Endothelial cell of umbilical vein (primary cell): ENCODE measurements at regions of chr14 and their contacts with region 1.

Region 1: GRCh38 chr14:63770187-63770807 is 42.4 kb upstream of the SGPP1 start:
- DNase-seq: peak; percentile 63
- H3K4me3 ChIP-seq: no peak overlapping the region
- H3K27ac ChIP-seq: no peak overlapping the region
- H3K4me1 ChIP-seq: no peaks in the 10 kb centered on the region
- H3K27me3 ChIP-seq: no peaks in the 10 kb centered on the region
- CTCF ChIP-seq: peak; percentile 53 to 58
- POLR2A ChIP-seq: no peak

Region 2: DNA sequence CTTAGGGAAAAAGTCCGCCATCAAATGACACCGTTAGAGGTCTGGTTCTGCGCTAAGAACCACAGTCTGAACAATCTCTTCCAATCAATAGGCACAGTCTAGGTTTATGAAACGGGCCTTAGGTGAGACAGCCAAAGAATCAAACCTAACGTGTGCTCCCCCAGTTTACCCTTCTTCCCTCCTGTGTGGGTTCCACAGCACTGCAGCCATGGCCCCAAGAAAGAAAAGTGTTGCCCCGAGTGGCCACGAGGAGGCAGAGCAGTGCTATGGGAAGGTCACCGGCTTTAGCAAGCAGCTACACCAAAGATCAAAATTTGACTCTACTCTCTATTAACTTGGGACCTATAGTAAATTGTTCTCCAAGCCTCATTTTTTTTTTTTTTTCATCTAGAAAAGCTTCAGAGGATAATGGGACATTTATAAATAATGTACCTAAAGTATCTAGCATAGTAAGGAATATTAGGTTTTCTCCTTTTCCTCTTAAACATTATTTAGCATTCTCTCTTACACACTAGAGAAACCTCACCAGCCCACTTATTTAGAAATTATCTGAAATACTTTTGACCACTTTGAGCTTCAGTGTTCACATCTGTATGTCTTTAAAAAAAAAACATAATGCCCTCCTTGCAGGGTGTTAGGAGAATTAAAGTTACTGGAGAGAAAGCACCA is 381.4 kb before region 1 on chr14:
- CTCF ChIA-PET with region 1: interaction called, 65 read pairs
- POLR2A ChIA-PET with region 1: no interaction called
- dilution Hi-C with region 1: no loop called
- intact Hi-C with region 1: loop called (anchors 1 kb)
- DNase-seq: peak; percentile 75
- H3K4me3 ChIP-seq: no peak overlapping the region
- H3K27ac ChIP-seq: no peak overlapping the region
- H3K4me1 ChIP-seq: no peaks in the 10 kb centered on the region
- H3K27me3 ChIP-seq: no peaks in the 10 kb centered on the region
- CTCF ChIP-seq: peak; percentile 73 to 81
- POLR2A ChIP-seq: no peak

Region 3: GRCh38 chr14:63632932-63633514 is 137.3 kb before region 1 on chr14:
- CTCF ChIA-PET with region 1: interaction called, 58 read pairs
- POLR2A ChIA-PET with region 1: no interaction called
- dilution Hi-C with region 1: no loop called
- intact Hi-C with region 1: loop called (anchors 1 kb)
- DNase-seq: peak; percentile 52
- H3K4me3 ChIP-seq: no peak overlapping the region
- H3K27ac ChIP-seq: no peak overlapping the region
- H3K4me1 ChIP-seq: no peaks in the 10 kb centered on the region
- H3K27me3 ChIP-seq: no peaks in the 10 kb centered on the region
- CTCF ChIP-seq: peak; percentile 41 to 45
- POLR2A ChIP-seq: no peak

Region 4: DNA sequence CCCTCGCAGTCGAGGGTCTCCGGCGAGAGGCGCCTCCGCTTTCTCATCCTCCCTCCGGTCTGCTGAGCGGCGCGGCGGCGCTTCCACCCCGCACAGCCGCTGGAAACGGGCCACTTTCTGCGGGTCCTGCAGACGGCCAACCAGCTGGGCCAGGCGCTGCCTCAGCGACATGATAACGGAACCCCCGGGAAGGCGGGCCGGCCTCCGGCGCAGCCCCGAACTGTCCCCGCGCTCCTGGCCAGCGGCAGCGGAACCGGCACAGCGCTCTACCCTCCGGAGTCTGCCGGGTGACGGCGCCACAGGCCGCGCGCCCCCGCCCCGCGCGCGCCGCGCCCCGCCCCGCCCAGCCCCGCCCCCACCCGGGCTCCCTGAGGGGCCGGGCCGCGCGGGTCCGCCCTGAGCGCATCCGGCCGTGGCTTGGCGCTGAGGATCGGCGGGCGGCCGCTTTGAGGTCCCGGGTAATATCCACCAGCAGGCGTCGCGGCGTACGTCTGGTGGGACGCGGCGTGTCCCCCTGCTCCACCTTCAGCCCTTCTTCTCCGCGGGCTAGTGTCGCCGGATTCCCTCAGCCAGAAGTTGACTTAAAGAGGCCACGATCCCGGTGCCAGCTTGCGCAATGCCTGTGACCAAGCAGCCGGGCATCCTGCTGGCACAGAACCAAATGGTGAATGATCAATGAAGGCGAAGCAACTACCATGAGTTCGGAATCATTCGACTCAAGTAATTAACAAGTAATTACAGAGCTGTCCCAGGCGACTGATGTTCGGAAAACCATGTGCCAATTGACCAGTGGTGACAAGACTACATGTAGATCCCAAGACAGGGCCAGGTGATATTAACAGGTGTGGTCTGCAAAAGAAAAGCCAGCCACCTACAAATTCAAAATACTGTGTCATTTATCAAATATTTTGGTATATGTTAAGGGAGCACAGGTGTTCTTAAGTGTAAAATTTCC is 42.2 kb before region 1 on chr14 and contains the start of gene SGPP1:
- CTCF ChIA-PET with region 1: interaction called, 14 read pairs
- POLR2A ChIA-PET with region 1: no interaction called
- dilution Hi-C with region 1: no loop called
- intact Hi-C with region 1: loop called (anchors 1 kb)
- DNase-seq: peak; percentile 71
- H3K4me3 ChIP-seq: peak within 1 kb of the TSS; percentile 28 to 80 (median 63)
- H3K27ac ChIP-seq: peak within 1 kb of the TSS; percentile 46
- H3K4me1 ChIP-seq: peaks cover 17% of the 10 kb centered on the region
- H3K27me3 ChIP-seq: no peaks in the 10 kb centered on the region
- CTCF ChIP-seq: peak; percentile 21 to 52
- POLR2A ChIP-seq: peak; percentile 79
- total RNA-seq, gene SGPP1: 7.6 and 7.9 TPM in 2 replicates

Region 5: DNA sequence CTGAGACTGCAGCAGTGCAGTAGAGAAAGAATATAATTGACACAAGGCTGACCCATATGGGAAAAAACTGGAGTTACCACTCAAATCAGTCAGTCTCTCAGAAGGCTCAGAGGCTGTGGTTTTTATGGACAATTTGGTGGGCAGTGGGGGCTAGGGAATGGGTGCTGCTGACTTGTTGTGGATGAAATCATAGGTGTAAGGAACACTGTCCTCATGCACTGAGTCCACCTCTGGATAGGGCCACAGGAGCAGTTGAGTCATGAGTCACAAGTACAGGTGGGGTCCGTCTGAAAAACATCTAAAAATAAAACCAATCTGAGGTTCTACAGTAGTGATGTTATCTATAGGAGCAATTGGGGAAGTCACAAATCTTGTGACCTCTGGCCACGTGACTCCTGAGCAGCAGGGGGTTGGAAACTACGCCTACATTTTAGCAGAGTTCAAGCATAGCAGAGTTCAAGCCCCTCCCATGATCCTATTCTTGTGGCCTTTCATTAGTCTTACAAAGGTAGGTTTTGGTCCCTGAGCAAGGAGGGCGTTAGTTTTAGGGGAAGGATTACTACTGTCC is 24.4 kb before region 1 on chr14:
- CTCF ChIA-PET with region 1: interaction called, 10 read pairs
- POLR2A ChIA-PET with region 1: no interaction called
- dilution Hi-C with region 1: no loop called
- intact Hi-C with region 1: no loop called
- DNase-seq: no peak
- H3K4me3 ChIP-seq: no peak overlapping the region
- H3K27ac ChIP-seq: no peak overlapping the region
- H3K4me1 ChIP-seq: no peaks in the 10 kb centered on the region
- H3K27me3 ChIP-seq: peaks cover 0 to 4% of the 10 kb centered on the region in 2 experiments
- CTCF ChIP-seq: no peak
- POLR2A ChIP-seq: no peak